ENCODE measurements at regions of chr1 and their contacts with region 1.

Region 1: GRCh38 chr1:225445644-225446594 is 18.1 kb upstream of the LBR start:
- DNase-seq: peak in 1 of 3 donors; percentile 25
- H3K4me3 ChIP-seq: peak overlapping the region in 1 of 3 experiments; percentile 66
- H3K4me3 Mint-ChIP-seq: peak overlapping the region; percentile 34 to 83
- H3K27ac ChIP-seq: peak overlapping the region; percentile 69 to 76
- H3K27ac Mint-ChIP-seq: peak overlapping the region; percentile 91 to 98 (median 96)
- H3K4me1 ChIP-seq: peaks cover 78 to 89% of the 10 kb centered on the region in 2 donors
- H3K4me1 Mint-ChIP-seq: peaks cover 86% of the 10 kb centered on the region
- H3K27me3 ChIP-seq: no peaks in the 10 kb centered on the region
- H3K27me3 Mint-ChIP-seq: peaks cover 0 to 4% (median 0%) of the 10 kb centered on the region in 3 donors
- CTCF ChIP-seq: no peak

Region 2: DNA sequence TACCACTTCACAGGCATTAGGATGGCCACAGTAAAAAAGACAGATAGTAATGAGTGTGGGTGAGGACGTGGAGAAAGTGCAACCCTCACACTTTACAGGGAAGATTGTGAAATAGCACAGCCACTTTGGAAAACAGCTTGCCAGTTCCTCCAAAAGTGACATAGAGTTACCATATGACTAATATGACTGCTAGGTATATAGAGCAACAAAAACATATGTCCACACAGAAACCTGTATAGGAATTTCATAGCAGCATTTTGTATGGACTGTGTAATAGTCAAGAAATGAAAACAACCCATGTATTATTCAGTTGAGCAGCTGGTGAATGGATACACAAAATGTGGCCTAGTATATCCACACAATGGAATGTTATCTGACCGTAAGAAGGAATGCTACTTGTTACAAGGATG is 12.3 kb after region 1 on chr1:
- intact Hi-C with region 1: loop called in 1 of 2 experiments (anchors 2 kb)
- DNase-seq: peak; percentile 61 to 88 (median 73)
- H3K4me3 ChIP-seq: peak overlapping the region in 1 of 3 experiments; percentile 7
- H3K4me3 Mint-ChIP-seq: peak overlapping the region in 1 of 2 donors; percentile 78
- H3K27ac ChIP-seq: peak overlapping the region in 1 of 2 donors; percentile 66
- H3K27ac Mint-ChIP-seq: peak overlapping the region; percentile 63 to 93 (median 85)
- H3K4me1 ChIP-seq: peaks cover 27 to 37% of the 10 kb centered on the region in 2 donors
- H3K4me1 Mint-ChIP-seq: peaks cover 49% of the 10 kb centered on the region
- H3K27me3 ChIP-seq: no peaks in the 10 kb centered on the region
- H3K27me3 Mint-ChIP-seq: peaks cover 0 to 4% (median 0%) of the 10 kb centered on the region in 3 donors
- CTCF ChIP-seq: no peak